Prostate gland (tissue), 2 donors: ENCODE measurements at regions of chr18 and their contacts with region 1.

Region 1: GRCh38 chr18:12271376-12272235 is 17.4 kb downstream of the CIDEA start:
- DNase-seq: peak; percentile 65
- H3K4me3 ChIP-seq: peak overlapping the region; percentile 22 to 31
- H3K27ac ChIP-seq: peak overlapping the region; percentile 68 to 73
- H3K4me1 ChIP-seq: no peaks in the 10 kb centered on the region
- H3K27me3 ChIP-seq: no peaks in the 10 kb centered on the region
- CTCF ChIP-seq: peak; percentile 20 to 88 (median 80)
- POLR2A ChIP-seq: no peak

Region 2: DNA sequence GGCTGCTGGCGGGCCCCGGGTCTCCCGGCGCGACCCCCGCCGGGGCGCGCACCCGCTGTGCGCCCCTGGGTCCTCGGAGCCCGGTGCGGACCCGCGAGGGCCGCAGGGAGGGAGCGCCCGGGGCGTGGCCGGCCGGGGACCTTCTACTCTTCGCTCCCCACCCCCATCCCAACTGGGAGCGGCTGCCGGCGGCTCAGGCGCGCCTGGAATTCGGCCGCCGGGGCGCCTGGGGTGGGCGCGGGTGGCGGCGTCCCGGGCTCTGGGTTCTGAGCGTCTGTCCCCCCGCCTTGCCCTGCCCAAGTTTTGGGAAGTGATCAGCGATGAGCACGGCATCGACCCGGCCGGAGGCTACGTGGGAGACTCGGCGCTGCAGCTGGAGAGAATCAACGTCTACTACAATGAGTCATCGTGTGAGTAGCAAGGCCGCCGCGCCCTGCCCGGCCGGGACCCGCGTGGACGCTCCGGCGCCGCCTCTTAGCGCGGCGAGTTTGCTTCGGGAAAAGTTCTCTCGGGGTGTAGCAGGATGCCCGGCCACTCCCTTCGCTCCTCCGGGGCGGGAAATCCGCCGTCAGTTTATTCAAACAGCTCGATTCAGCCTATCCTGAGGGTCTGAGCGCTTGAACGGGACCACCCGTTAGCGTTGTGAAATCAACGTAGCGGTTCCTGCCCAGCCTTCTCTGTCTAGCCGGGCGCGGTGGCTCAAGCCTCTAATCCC is 36.9 kb after region 1 on chr18:
- intact Hi-C with region 1: loop called (anchors 5 kb)
- DNase-seq: peak; percentile 22
- H3K4me3 ChIP-seq: peak overlapping the region; percentile 40 to 66
- H3K27ac ChIP-seq: peak overlapping the region; percentile 82 to 83
- H3K4me1 ChIP-seq: no peaks in the 10 kb centered on the region
- H3K27me3 ChIP-seq: no peaks in the 10 kb centered on the region
- CTCF ChIP-seq: no peak
- POLR2A ChIP-seq: peak; percentile 46

Region 3: DNA sequence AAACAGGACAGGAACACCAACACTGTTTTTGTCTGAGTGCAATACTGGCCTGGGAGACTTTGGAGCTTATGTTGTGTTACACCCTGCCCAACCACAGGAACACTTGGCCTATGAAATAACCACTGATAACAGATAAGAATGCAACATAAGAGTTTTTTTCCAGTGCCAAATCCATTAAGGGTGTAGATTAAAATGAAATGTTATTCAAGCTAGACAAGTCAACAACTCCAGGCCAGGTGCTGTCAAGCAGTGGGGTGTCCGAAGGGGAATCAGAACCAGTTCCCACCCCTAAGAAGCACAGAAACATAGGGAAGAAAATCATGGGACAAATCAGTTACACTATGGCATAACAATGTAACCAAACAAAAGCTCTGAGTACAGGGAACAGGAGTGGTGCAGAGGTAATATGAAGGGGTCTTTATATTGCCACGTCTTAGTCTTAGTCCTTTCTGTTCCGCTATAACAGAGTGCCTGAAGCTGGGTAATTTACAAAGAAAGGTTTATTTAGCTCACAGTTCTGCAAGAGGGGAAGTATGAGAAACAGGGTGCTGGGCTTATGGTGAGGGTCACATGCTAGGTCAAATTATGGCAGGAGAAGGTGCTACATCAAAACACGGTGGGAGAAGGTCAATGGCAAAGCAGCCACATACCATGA is 101.6 kb after region 1 on chr18:
- intact Hi-C with region 1: loop called (anchors 5 kb)
- DNase-seq: no peak
- H3K4me3 ChIP-seq: no peak overlapping the region
- H3K27ac ChIP-seq: no peak overlapping the region
- H3K4me1 ChIP-seq: peaks cover 3% of the 10 kb centered on the region
- H3K27me3 ChIP-seq: no peaks in the 10 kb centered on the region
- CTCF ChIP-seq: no peak
- POLR2A ChIP-seq: no peak

Region 4: DNA sequence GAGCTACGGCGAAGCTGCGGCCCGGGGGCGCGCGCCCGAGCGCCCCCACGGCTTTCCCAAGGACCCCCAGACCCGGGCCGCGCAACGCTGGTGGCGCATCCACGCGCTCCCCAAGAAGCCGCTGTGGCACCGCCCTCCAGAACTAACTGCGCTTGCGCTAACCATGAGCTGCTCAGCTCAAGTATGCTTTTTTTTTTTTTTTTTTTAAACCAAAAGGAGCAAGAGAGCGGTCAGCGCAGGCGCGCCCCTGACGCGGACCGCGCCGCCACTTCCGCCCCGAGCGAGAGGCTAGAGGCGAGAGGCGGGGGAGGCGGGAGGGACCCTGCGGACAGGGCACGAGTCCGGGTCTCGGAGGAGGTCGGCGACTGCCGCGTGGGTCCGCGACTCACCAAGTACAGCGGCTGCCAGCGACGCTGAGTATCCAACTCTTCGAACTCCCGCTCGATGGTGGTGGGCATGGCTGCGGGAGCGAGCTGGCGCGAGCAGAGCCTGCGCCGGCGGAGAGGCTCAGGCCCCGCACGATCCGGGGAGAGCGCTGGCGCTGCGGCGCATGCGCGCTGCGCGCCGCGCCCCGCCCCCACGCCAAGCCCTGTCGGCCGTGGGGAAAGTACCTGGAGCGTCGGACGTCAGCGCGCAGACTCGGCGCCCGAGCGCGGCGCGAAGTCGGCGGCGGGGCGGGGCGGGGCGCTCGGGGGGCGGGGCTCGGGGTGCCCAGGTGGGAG is 612.2 kb after region 1 on chr18 and contains the start of gene PTPN2:
- intact Hi-C with region 1: loop called (anchors 10 kb)
- DNase-seq: peak; percentile 92
- H3K4me3 ChIP-seq: peak within 1 kb of the TSS; percentile 63 to 88
- H3K27ac ChIP-seq: peak within 1 kb of the TSS; percentile 98 to 99
- H3K4me1 ChIP-seq: no peaks in the 10 kb centered on the region
- H3K27me3 ChIP-seq: no peaks in the 10 kb centered on the region
- CTCF ChIP-seq: no peak
- POLR2A ChIP-seq: peak; percentile 82
- total RNA-seq, gene PTPN2: 25.0 to 34.0 TPM

Region 5: GRCh38 chr18:13185675-13186198 is 914.1 kb after region 1 on chr18:
- intact Hi-C with region 1: no loop called
- DNase-seq: no peak
- H3K4me3 ChIP-seq: no peak overlapping the region
- H3K27ac ChIP-seq: no peak overlapping the region
- H3K4me1 ChIP-seq: no peaks in the 10 kb centered on the region
- H3K27me3 ChIP-seq: no peaks in the 10 kb centered on the region
- CTCF ChIP-seq: no peak
- POLR2A ChIP-seq: no peak